ENCODE measurements at regions of chr22 and their contacts with region 1.

Region 1: GRCh38 chr22:46563381-46564083 is 26.1 kb upstream of the CELSR1 start:
- DNase-seq: peak; percentile 77
- ATAC-seq: peak; percentile 89
- H3K4me3 Mint-ChIP-seq: peak overlapping the region; percentile 55
- H3K27ac Mint-ChIP-seq: no peak overlapping the region
- H3K4me1 Mint-ChIP-seq: peaks cover 17% of the 10 kb centered on the region
- H3K27me3 Mint-ChIP-seq: peaks cover 2% of the 10 kb centered on the region
- CTCF ChIP-seq: peak; percentile 45

Region 2: GRCh38 chr22:46150034-46150654 is 413.4 kb before region 1 on chr22 and contains the start of gene PPARA:
- CTCF ChIA-PET with region 1: no interaction called
- POLR2A ChIA-PET with region 1: no interaction called
- intact Hi-C with region 1: no loop called
- DNase-seq: peak; percentile 92
- ATAC-seq: peak; percentile 80
- H3K4me3 Mint-ChIP-seq: peak within 1 kb of the TSS; percentile 87
- H3K27ac Mint-ChIP-seq: peak within 1 kb of the TSS; percentile 73
- H3K4me1 Mint-ChIP-seq: peaks cover 23% of the 10 kb centered on the region
- H3K27me3 Mint-ChIP-seq: no peaks in the 10 kb centered on the region
- CTCF ChIP-seq: no peak
- total RNA-seq, gene PPARA: 17.7 and 23.0 TPM in 2 replicates

Region 3: GRCh38 chr22:46613606-46614021 is 50.1 kb after region 1 on chr22:
- CTCF ChIA-PET with region 1: interaction called, 9 read pairs
- POLR2A ChIA-PET with region 1: interaction called, 4 read pairs
- intact Hi-C with region 1: loop called (anchors 1 kb)
- DNase-seq: no peak
- ATAC-seq: peak; percentile 59
- H3K4me3 Mint-ChIP-seq: peak overlapping the region; percentile 86
- H3K27ac Mint-ChIP-seq: peak overlapping the region; percentile 84
- H3K4me1 Mint-ChIP-seq: peaks cover 35% of the 10 kb centered on the region
- H3K27me3 Mint-ChIP-seq: no peaks in the 10 kb centered on the region
- CTCF ChIP-seq: no peak

Region 4: DNA sequence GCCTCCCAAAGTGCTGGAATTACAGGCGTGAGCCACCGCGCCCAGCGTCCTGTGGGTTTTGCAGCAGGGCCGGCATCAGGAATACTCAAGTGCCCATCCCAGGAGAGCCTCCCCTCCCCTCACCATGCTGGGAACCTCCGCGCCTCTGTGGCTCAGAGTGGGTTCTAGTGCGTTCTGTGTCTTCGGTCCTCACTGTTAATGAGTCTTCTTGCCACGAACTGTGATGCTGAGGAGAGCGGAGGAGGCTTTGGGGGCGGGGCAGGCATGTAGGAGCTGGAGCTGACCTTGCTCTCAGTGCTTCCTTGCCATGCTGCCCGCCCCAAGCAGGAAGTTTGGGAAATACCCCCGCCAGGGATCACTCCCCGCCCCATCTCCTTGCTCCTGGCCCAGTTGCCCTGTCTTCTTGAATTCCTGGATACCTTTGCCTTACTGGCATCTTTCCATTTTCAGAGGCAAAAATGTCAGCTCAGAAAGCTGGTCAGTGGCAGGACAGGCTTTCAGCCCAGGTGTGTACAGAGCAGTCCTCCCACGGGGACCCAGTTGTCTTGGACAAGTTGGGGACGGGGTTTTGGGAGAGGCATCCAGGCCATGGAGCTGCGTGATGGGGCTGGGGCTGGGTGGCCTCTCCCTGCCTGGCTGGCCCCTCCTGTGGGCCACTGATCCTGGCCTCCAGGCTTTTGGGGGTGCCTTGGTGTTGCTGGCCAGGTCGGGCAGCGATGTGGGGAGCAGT is 61.7 kb after region 1 on chr22:
- CTCF ChIA-PET with region 1: interaction called, 15 read pairs
- POLR2A ChIA-PET with region 1: interaction called, 17 read pairs
- intact Hi-C with region 1: no loop called
- DNase-seq: no peak
- ATAC-seq: no peak
- H3K4me3 Mint-ChIP-seq: no peak overlapping the region
- H3K27ac Mint-ChIP-seq: no peak overlapping the region
- H3K4me1 Mint-ChIP-seq: peaks cover 33% of the 10 kb centered on the region
- H3K27me3 Mint-ChIP-seq: no peaks in the 10 kb centered on the region
- CTCF ChIP-seq: no peak

Region 5: GRCh38 chr22:46659791-46660186 is 96.3 kb after region 1 on chr22:
- CTCF ChIA-PET with region 1: no interaction called
- POLR2A ChIA-PET with region 1: no interaction called
- intact Hi-C with region 1: no loop called
- DNase-seq: no peak
- ATAC-seq: no peak
- H3K4me3 Mint-ChIP-seq: no peak overlapping the region
- H3K27ac Mint-ChIP-seq: no peak overlapping the region
- H3K4me1 Mint-ChIP-seq: peaks cover 5% of the 10 kb centered on the region
- H3K27me3 Mint-ChIP-seq: no peaks in the 10 kb centered on the region
- CTCF ChIP-seq: no peak

Region 6: DNA sequence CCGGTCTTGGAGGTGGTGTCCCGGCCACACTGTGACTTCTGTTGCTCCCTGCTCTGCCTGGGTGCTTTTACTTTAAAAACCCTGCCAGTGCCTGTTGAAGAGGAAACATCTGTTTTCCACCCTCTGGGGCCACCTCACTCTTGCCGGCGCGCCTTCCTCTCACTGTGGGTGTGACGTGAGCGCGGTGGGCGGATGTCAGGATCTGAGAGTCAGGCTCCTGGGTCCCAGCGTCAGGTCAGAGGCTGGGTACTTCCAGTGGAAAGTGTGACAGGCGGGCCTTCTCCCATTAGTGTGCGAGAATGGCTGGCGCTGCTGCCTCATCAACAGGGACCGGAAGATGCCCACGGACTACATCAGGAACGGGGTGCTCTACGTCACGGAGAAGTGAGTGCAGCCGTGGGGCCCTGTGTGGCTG is 110.8 kb after region 1 on chr22:
- CTCF ChIA-PET with region 1: interaction called, 6 read pairs
- POLR2A ChIA-PET with region 1: no interaction called
- intact Hi-C with region 1: loop called (anchors 1 kb)
- DNase-seq: peak; percentile 73
- ATAC-seq: peak; percentile 81
- H3K4me3 Mint-ChIP-seq: peak overlapping the region; percentile 76
- H3K27ac Mint-ChIP-seq: peak overlapping the region; percentile 77
- H3K4me1 Mint-ChIP-seq: peaks cover 34% of the 10 kb centered on the region
- H3K27me3 Mint-ChIP-seq: no peaks in the 10 kb centered on the region
- CTCF ChIP-seq: no peak

Region 7: DNA sequence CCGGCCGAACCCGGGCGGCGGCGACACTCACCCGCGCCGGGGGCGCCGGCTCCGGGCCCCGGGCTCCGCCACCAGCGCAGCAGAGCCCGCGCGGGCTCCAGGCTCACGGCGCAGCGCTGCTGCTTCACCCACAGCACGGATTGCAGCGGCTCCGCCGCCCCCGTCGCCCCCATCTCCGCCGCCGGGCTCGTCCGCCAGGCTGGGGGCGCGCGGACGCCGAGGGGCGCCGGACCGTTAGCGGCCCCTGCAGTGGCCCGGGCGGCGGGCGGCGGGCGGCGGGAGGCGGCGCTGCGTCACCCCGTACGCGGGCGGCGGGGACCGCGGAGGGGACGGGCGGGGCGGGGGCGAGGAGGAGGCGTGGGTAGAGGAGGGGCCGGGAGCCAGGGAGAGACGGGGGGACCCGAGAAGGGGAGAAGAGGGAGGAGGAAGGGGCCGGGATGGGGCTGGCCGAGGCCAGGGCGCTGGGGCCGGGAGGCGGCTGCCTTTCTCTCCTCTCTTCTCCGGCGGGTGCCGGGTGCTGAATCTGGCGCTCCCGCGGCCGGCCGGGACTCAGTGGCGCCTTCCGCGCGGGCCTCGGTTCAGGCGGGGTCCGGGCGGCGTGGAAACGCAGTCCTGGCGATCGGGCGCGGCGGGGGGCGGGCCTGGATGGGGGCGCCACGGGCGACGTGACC is 174.6 kb after region 1 on chr22 and contains the start of gene CERK:
- CTCF ChIA-PET with region 1: interaction called, 14 read pairs
- POLR2A ChIA-PET with region 1: interaction called, 8 read pairs
- intact Hi-C with region 1: loop called (anchors 1 kb)
- DNase-seq: peak; percentile 61
- ATAC-seq: peak; percentile 51
- H3K4me3 Mint-ChIP-seq: peak within 1 kb of the TSS; percentile 89
- H3K27ac Mint-ChIP-seq: peak within 1 kb of the TSS; percentile 82
- H3K4me1 Mint-ChIP-seq: peaks cover 42% of the 10 kb centered on the region
- H3K27me3 Mint-ChIP-seq: no peaks in the 10 kb centered on the region
- CTCF ChIP-seq: no peak
- total RNA-seq, gene CERK: 13.8 and 16.9 TPM in 2 replicates

Region 8: GRCh38 chr22:46762238-46763050 is 198.9 kb after region 1 on chr22 and contains the start of gene TBC1D22A:
- CTCF ChIA-PET with region 1: interaction called, 23 read pairs
- POLR2A ChIA-PET with region 1: interaction called, 8 read pairs
- intact Hi-C with region 1: loop called (anchors 1 kb)
- DNase-seq: peak; percentile 93
- ATAC-seq: peak; percentile 72
- H3K4me3 Mint-ChIP-seq: peak within 1 kb of the TSS; percentile 99
- H3K27ac Mint-ChIP-seq: peak within 1 kb of the TSS; percentile 99
- H3K4me1 Mint-ChIP-seq: peaks cover 63% of the 10 kb centered on the region
- H3K27me3 Mint-ChIP-seq: no peaks in the 10 kb centered on the region
- CTCF ChIP-seq: no peak
- total RNA-seq, gene TBC1D22A: 73.0 and 85.9 TPM in 2 replicates

Region 9: DNA sequence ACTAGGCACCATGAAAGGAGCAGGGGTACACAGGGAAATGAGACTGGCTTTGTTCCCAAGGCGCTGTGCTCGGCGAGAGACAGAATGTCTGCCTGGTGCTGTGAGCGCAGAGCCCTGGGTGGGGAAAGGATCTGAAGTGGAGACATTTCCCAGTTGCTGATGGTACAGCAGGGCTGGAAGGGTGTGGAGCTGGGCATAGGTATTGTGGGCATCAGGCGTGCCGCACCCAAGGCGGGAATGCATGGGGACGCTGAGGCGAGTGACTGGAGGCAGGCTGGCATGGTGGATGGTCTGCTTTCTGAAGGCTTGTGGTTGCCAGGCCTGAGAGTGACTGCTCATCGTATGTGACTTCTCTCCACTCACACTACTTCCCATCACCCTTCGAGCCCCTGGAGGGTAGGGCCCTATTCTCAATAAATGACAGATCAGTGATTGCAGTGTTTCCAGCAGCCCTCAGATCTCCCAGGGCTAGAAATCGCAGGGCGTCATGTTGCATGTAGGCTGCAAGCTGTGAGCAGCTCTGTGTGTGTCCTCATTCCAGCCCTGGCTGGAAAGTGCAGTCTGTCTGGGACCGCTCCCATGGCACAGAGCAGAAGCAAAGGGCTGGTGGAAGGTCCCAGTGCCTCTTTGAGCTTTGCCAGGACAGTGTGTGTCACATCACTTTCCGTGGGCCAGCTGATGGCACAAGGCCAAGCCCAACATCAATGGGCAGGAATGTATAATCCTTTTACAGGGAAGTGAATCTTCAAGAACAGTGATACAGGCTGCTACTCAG is 266.6 kb after region 1 on chr22:
- CTCF ChIA-PET with region 1: no interaction called
- POLR2A ChIA-PET with region 1: no interaction called
- intact Hi-C with region 1: no loop called
- DNase-seq: no peak
- ATAC-seq: no peak
- H3K4me3 Mint-ChIP-seq: no peak overlapping the region
- H3K27ac Mint-ChIP-seq: no peak overlapping the region
- H3K4me1 Mint-ChIP-seq: peaks cover 18% of the 10 kb centered on the region
- H3K27me3 Mint-ChIP-seq: no peaks in the 10 kb centered on the region
- CTCF ChIP-seq: no peak